ENCODE measurements at regions of chr5 and their contacts with region 1.

Region 1: GRCh38 chr5:116574367-116575325 is at the start of gene SEMA6A:
- DNase-seq: peak; percentile 79 to 97 (median 94)

Region 2: DNA sequence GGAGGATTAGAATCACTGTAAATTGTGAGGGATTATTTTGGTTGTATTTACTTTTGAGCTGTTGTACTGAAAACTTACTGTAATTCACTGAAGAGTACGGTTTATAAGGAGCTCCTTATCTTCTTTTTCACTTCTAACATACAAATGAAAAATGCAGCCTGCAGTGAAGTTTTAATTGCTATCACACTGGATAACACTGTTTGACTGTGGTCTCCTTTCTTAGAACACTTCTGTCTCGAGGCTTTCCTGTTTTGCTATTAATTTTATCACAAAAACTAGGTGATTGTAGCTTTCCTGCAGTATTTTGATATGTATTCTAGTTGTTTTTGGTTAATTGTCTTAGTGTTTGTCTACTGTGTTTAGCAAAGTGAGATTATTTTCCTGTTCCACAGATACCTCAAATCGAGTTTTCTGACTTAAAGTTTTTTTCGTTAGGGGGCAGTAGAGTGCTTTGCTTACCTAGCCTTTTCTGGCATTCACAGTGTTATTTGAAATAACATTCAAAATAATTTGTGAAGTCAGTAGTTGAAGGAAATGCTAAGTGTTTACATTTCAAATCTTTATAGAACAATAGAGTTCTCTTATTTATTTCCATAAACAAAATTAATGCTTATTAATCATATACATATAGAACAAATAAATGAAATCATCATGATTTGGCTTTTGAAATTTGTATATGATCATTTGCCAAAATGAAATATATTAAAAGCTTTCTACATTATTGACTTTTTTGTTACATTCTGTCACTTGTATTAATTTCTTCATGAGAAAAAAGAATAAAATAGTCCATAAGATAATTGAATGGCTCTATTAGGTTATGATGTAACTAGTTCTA is 436.9 kb before region 1 on chr5:
- intact Hi-C with region 1: loop called (anchors 10 kb)
- DNase-seq: peak in 9 of 42 donors; percentile 10 to 64 (median 23)

Region 3: DNA sequence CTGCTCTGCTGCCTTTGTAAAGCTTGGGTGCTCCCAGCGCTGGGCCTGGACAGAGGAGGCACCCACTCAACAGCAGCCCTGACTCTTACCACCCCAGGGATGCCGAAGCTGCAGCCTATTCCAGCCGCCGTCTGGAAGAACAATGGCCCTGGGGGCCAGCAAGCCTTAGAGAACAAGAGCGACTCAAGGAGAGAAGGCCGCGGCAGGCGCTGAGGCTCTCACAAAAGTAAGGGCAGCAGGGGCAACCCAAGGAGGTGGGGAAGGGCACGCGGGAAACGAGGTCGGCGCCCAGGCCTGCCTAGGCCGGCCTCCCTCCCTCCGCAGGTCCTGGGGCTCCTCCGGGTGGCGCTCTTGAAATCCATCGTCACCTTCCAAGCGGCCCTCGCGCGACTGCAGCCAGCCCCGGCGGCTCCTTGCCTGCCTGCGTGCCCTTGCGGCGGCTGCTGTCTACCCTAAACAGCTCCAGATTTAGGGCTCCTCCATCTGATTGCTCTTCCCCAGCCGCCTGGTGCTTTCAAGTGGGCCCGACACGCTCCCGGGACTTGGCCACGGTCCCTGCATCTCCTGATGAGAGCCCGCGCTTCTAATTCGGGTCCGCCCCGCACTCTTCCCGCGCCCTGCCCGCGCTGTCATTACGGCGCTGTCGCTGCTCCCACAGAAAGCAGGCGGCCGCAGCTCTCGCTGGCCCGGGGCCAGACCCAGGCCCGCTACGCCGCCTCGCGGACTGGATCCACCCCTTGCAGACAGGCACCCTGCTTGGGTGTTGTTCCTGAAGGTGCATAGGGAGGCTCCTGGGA is 213.3 kb before region 1 on chr5:
- intact Hi-C with region 1: loop called (anchors 10 kb)
- DNase-seq: peak; percentile 32 to 90 (median 76)

Region 4: DNA sequence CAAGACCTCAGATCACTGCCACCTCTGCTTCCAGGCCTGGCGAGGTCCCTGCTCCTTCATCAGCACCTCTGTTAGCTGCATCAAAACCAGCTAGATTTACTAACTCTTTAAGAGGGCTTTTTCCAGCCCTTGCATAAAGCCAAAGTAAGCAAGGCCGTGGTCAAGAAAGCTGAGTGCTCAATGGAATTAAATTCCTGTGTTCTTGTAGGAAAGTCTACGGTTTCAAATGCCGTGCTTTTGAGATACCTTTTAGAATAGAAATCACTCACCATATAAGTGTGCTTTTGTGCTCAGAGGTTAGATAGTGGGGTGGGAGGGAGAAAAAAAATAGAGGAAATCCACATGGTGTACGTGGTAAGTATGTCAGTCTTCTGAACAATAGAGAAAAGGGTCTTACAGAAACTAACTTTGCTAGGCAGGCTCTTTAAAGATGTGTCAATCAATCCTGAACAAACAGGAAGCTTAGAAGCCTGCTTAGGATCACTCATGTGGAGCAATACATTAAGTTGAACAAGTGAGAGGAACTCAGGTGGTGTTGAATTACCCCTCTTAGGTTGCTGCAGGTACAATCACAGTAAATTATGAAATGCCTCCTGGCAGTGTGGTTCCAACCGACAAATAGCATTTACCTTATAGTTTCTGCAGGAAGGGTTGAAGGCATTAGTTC is 79.7 kb before region 1 on chr5:
- intact Hi-C with region 1: loop called (anchors 5 kb)
- DNase-seq: no peak

Region 5: GRCh38 chr5:116622375-116623050 is 47.9 kb after region 1 on chr5:
- intact Hi-C with region 1: loop called (anchors 2 kb)
- DNase-seq: peak in 40 of 42 donors; percentile 11 to 78 (median 46)

Region 6: DNA sequence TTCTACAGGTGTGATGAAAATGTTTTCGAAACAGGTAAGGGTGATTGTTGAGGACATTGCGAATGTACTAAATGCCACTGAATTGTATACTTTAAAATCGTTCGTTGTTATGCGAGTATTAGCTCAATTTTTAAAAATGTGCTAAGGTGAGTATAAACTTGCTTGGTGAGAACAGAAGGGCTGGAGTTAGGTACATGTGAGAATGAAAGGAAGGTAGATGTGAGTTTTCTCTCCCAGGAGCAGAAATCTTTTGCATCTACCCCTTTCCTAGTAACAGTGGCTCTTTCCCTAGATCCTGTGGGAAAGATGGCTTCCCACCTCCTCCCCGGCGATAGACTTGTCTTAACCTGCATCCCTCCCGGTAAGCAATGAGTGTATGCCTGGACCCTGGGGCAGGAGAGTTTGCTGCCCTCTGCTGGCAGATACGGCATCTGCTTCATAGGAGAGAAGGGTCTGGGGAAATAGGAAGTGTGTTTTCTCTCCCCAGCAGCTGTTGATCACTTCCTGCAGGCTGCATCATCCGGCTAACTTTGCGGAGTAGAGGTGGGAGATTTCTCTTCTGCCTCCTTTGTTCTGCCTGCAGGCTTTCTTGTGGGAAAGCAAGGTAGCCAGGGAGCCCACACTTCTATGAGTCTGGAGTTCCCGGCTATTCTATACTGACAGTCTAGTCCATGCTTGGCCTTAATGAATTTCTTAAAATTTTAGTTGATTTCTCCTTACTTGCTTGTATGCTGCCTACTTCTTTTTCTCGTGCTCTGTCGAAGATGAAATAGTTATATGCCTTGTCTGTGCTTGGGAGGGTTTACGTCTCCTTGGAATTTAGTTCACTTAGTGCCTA is 373.3 kb after region 1 on chr5:
- intact Hi-C with region 1: loop called (anchors 5 kb)
- DNase-seq: peak in 41 of 42 donors; percentile 21 to 86 (median 60)